ENCODE measurements at regions of chr13 and their contacts with region 1.

Region 1: GRCh38 chr13:79988573-79988972 is 352.4 kb downstream of the SPRY2 start:
- DNase-seq: no peak
- H3K4me3 Mint-ChIP-seq: no peak overlapping the region
- H3K27ac Mint-ChIP-seq: peak overlapping the region; percentile 20
- H3K4me1 Mint-ChIP-seq: peaks cover 46% of the 10 kb centered on the region
- H3K27me3 Mint-ChIP-seq: no peaks in the 10 kb centered on the region
- CTCF ChIP-seq: no peak

Region 2: DNA sequence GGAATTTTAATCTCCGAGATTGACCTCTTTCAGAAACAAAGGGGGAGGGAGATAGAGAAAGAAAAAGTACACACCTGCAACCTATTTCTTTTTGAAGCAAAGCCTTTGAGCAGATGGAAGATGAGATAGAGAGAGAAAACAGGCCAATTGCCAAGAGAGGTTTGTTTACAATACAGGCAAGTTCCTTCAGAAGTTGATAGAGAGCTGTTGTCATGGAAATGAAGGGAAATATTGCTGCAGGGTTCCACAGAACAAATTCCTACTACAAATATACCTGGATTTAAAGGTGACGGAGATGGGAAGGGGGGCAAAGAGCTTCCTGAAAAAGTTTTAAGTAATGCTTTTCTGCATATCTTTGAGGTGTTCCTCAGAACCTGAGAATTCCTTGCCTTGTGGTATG is 119.2 kb before region 1 on chr13:
- CTCF ChIA-PET with region 1: no interaction called
- POLR2A ChIA-PET with region 1: no interaction called
- intact Hi-C with region 1: no loop called
- DNase-seq: no peak
- H3K4me3 Mint-ChIP-seq: no peak overlapping the region
- H3K27ac Mint-ChIP-seq: no peak overlapping the region
- H3K4me1 Mint-ChIP-seq: peaks cover 18% of the 10 kb centered on the region
- H3K27me3 Mint-ChIP-seq: no peaks in the 10 kb centered on the region
- CTCF ChIP-seq: no peak

Region 3: GRCh38 chr13:79936368-79937136 is 52.0 kb before region 1 on chr13:
- CTCF ChIA-PET with region 1: no interaction called
- POLR2A ChIA-PET with region 1: no interaction called
- intact Hi-C with region 1: loop called (anchors 5 kb)
- DNase-seq: peak; percentile 93
- H3K4me3 Mint-ChIP-seq: peak overlapping the region; percentile 37
- H3K27ac Mint-ChIP-seq: peak overlapping the region; percentile 99
- H3K4me1 Mint-ChIP-seq: peaks cover 27% of the 10 kb centered on the region
- H3K27me3 Mint-ChIP-seq: no peaks in the 10 kb centered on the region
- CTCF ChIP-seq: no peak

Region 4: GRCh38 chr13:80030491-80030890 is 41.9 kb after region 1 on chr13:
- CTCF ChIA-PET with region 1: no interaction called
- POLR2A ChIA-PET with region 1: no interaction called
- intact Hi-C with region 1: no loop called
- DNase-seq: peak; percentile 84
- H3K4me3 Mint-ChIP-seq: no peak overlapping the region
- H3K27ac Mint-ChIP-seq: no peak overlapping the region
- H3K4me1 Mint-ChIP-seq: peaks cover 5% of the 10 kb centered on the region
- H3K27me3 Mint-ChIP-seq: no peaks in the 10 kb centered on the region
- CTCF ChIP-seq: peak; percentile 63